RWPE1 (cell line): ENCODE measurements at regions of chr2 and their contacts with region 1.

Region 1: DNA sequence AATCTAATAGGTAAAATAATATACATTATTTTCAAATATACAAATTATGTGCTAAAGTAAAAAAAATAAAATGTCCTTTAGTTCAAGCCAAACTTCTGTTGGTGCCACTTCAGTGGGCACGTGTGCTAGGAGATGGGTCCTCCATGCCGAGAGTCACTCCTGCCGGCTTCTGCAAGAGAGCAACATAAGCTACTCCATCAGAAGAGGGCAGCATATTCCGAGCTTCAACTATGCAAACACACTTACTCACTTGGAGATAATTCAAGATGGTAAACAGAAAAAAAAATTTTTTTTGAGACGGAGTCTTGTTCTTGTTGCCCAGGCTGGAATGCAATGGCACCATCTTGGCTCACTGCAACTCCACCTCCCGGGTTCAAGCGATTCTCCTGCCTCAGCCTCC is 24.4 kb downstream of the CNOT11 start:
- DNase-seq: no peak
- H3K27ac ChIP-seq: no peak overlapping the region
- CTCF ChIP-seq: no peak

Region 2: DNA sequence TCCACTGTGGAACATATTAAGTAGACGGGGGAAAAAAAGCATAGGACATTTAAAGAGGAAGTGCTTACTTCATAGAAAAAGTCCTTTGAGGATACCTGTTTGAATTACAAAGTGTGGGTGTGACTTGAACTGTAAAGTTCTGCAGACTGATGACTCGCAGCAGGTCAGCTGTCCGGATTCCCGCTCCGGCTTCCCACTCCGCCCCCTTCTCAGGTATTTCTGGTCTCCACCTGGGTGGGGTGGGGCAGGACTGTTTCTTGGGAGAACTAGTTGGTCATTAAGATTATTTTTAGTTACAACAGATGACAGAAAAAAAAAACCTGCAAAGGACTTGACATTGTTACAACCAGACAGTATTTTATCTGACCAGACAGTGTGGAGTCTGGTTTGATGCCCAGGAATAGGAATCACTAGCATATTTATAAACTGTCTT is 11.1 kb before region 1 on chr2:
- CTCF ChIA-PET with region 1: interaction called, 11 read pairs
- POLR2A ChIA-PET with region 1: no interaction called
- DNase-seq: peak; percentile 57
- H3K27ac ChIP-seq: no peak overlapping the region
- CTCF ChIP-seq: no peak

Region 3: DNA sequence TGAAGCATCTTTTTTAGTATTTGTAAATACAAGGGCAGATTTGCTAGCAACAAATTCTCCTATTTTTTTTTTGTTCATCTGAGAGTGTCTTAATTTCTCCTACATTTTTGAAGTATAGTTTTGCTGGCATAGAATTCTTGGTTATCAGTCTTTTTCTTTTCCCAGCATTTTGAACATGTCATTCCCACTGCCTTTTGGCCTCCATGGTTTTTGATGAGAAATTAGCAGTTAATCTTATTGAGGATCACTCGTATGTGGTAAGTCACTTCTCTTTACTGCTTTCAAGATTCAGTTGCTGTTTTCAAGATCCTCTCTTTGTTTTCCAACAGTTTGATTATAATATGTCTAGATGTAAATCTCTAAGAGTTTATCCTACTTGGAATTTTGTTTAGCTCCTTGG is 48.3 kb after region 1 on chr2:
- CTCF ChIA-PET with region 1: no interaction called
- POLR2A ChIA-PET with region 1: no interaction called
- DNase-seq: no peak
- H3K27ac ChIP-seq: no peak overlapping the region
- CTCF ChIP-seq: no peak

Region 4: GRCh38 chr2:101697124-101698013 is 420.3 kb after region 1 on chr2 and contains the start of gene MAP4K4:
- CTCF ChIA-PET with region 1: no interaction called
- POLR2A ChIA-PET with region 1: no interaction called
- DNase-seq: peak; percentile 84
- H3K27ac ChIP-seq: peak within 1 kb of the TSS; percentile 90
- CTCF ChIP-seq: peak; percentile 44